Activated CD4-positive, alpha-beta T cell treated with anti-CD3 and anti-CD28 coated beads, Interleukin-2, amount 10 ng/mL, durations not matched to agents 24 days and 14 days (primary cell): ENCODE measurements at regions of chr3 and their contacts with region 1.

Region 1: GRCh38 chr3:195583831-195584542 is at the start of gene APOD:
- DNase-seq: no peak
- H3K4me3 Mint-ChIP-seq: no peak within 1 kb of the TSS
- H3K27ac Mint-ChIP-seq: peak within 1 kb of the TSS; percentile 50
- H3K4me1 Mint-ChIP-seq: peaks cover 16% of the 10 kb centered on the region
- H3K27me3 Mint-ChIP-seq: peaks cover 2% of the 10 kb centered on the region
- total RNA-seq, gene APOD: 1.8 and 2.6 TPM in 2 replicates

Region 2: GRCh38 chr3:195259475-195260279 is 324.3 kb before region 1 on chr3:
- intact Hi-C with region 1: no loop called
- DNase-seq: peak; percentile 96
- H3K4me3 Mint-ChIP-seq: peak overlapping the region; percentile 57
- H3K27ac Mint-ChIP-seq: no peak overlapping the region
- H3K4me1 Mint-ChIP-seq: peaks cover 20% of the 10 kb centered on the region
- H3K27me3 Mint-ChIP-seq: no peaks in the 10 kb centered on the region

Region 3: DNA sequence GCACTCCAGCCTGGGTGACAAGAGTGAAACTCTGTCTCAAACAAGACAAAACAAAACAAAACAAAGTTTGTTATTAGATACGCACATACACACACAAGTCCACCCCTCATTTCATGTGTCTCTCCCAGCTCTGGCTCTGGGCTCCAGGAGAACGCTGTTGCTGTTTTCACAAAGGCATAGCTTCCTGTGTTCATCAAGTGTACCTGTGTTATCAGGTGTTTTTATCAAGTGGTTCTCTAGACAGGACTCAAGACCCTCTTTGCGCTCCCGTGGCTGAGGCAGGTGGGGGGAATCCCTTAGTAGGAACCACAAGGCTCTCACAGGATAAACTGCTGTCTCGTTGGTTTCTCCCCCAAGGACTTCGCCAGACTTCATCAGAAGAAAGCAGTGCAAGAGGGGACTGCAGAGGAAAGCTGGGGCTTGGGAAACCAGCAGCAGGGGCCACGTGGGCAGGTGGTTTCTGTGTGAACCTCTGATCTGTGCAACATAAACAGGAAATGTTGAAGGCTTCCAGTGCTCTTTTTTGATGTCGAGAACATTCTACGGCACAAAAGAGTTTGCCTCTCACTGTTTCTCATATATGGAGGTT is 34.0 kb before region 1 on chr3:
- intact Hi-C with region 1: loop called (anchors 1 kb)
- DNase-seq: peak; percentile 94
- H3K4me3 Mint-ChIP-seq: peak overlapping the region; percentile 76
- H3K27ac Mint-ChIP-seq: peak overlapping the region; percentile 93
- H3K4me1 Mint-ChIP-seq: peaks cover 71% of the 10 kb centered on the region
- H3K27me3 Mint-ChIP-seq: no peaks in the 10 kb centered on the region